Naive thymus-derived CD4-positive, alpha-beta T cell (primary cell): ENCODE measurements at regions of chr14 and their contacts with region 1.

Region 1: DNA sequence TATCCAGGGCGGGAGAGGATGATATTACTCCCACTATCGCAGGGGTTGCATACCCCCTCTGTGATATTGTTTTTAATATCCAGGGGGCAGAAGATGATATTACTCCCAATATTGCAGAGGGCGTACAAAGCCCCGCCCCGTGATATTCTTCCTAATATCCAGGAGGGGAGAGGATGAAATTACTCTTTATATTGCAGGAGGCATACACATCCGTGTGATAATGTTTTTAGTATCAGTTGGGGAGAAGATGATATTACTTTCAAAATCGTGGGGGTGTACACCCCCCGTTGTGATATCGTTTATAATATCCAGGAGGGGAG is 52.9 kb upstream of the OXA1L start:
- DNase-seq: no peak
- ATAC-seq: no peak
- H3K4me3 ChIP-seq: peak overlapping the region; percentile 34
- H3K4me3 Mint-ChIP-seq: peak overlapping the region; percentile 79 to 92 (median 88)
- H3K27ac ChIP-seq: no peak overlapping the region
- H3K27ac Mint-ChIP-seq: peak overlapping the region in 4 of 9 donors; percentile 32 to 76 (median 64)
- H3K4me1 ChIP-seq: peaks cover 4 to 6% of the 10 kb centered on the region in 2 donors
- H3K4me1 Mint-ChIP-seq: peaks cover 3 to 17% (median 11%) of the 10 kb centered on the region in 7 donors
- H3K27me3 ChIP-seq: no peaks in the 10 kb centered on the region
- H3K27me3 Mint-ChIP-seq: peaks cover 27 to 44% (median 34%) of the 10 kb centered on the region in 5 donors

Region 2: DNA sequence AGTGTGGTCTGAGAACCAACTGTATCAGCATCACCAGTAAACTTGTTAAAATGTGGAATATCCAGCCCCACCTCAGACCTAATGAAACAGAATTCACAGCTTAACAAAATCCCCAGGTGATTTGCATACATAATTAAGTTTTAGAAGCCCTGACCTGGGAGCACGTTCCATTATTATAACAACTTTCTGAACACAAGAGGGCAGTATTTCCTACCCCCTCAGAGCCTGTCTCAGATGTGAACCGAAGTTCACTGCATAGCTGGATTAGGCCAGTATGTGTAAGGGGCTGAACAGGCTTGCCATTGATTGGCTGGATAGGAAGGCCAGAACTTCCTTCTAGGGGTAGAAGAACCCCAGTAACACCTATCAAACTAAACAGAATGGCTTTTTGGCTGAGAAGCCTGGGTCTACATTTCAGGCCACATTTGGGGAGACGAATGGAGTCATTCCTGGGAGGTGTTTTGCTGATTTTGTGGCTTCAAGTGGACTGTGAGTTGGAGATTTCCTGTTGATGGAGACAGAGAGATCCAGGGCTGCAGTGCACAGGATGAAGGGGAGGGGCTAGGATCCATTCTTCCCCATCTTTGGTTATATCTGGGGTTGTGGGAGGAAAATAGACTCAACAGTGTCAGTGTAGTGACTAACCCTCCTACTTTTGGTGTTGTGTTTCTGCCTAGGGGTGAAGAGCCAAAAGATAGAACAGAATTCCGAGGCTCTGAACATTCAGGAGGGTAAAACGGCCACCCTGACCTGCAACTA is 945.3 kb before region 1 on chr14:
- CTCF ChIA-PET with region 1: no interaction called
- POLR2A ChIA-PET with region 1: no interaction called
- intact Hi-C with region 1: no loop called
- DNase-seq: peak in 7 of 9 donors; percentile 21 to 56 (median 41)
- ATAC-seq: peak; percentile 85
- H3K4me3 ChIP-seq: no peak overlapping the region
- H3K4me3 Mint-ChIP-seq: peak overlapping the region; percentile 42 to 81 (median 68)
- H3K27ac ChIP-seq: peak overlapping the region; percentile 6
- H3K27ac Mint-ChIP-seq: peak overlapping the region; percentile 4 to 87 (median 76)
- H3K4me1 ChIP-seq: no peaks in the 10 kb centered on the region
- H3K4me1 Mint-ChIP-seq: peaks cover 0 to 9% (median 0%) of the 10 kb centered on the region in 7 donors
- H3K27me3 ChIP-seq: no peaks in the 10 kb centered on the region
- H3K27me3 Mint-ChIP-seq: peaks cover 0 to 30% (median 5%) of the 10 kb centered on the region in 5 donors

Region 3: GRCh38 chr14:22822571-22823098 is 109.0 kb after region 1 on chr14:
- CTCF ChIA-PET with region 1: no interaction called
- POLR2A ChIA-PET with region 1: no interaction called
- intact Hi-C with region 1: loop called in 1 of 2 experiments (anchors 5 kb)
- DNase-seq: peak; percentile 50 to 71 (median 65)
- ATAC-seq: peak; percentile 83
- H3K4me3 ChIP-seq: peak overlapping the region; percentile 38
- H3K4me3 Mint-ChIP-seq: peak overlapping the region; percentile 47 to 78 (median 66)
- H3K27ac ChIP-seq: no peak overlapping the region
- H3K27ac Mint-ChIP-seq: peak overlapping the region in 3 of 9 donors; percentile 11 to 36 (median 22)
- H3K4me1 ChIP-seq: peaks cover 0 to 17% of the 10 kb centered on the region in 2 donors
- H3K4me1 Mint-ChIP-seq: peaks cover 6 to 37% (median 24%) of the 10 kb centered on the region in 7 donors
- H3K27me3 ChIP-seq: no peaks in the 10 kb centered on the region
- H3K27me3 Mint-ChIP-seq: peaks cover 0 to 16% (median 4%) of the 10 kb centered on the region in 5 donors

Region 4: DNA sequence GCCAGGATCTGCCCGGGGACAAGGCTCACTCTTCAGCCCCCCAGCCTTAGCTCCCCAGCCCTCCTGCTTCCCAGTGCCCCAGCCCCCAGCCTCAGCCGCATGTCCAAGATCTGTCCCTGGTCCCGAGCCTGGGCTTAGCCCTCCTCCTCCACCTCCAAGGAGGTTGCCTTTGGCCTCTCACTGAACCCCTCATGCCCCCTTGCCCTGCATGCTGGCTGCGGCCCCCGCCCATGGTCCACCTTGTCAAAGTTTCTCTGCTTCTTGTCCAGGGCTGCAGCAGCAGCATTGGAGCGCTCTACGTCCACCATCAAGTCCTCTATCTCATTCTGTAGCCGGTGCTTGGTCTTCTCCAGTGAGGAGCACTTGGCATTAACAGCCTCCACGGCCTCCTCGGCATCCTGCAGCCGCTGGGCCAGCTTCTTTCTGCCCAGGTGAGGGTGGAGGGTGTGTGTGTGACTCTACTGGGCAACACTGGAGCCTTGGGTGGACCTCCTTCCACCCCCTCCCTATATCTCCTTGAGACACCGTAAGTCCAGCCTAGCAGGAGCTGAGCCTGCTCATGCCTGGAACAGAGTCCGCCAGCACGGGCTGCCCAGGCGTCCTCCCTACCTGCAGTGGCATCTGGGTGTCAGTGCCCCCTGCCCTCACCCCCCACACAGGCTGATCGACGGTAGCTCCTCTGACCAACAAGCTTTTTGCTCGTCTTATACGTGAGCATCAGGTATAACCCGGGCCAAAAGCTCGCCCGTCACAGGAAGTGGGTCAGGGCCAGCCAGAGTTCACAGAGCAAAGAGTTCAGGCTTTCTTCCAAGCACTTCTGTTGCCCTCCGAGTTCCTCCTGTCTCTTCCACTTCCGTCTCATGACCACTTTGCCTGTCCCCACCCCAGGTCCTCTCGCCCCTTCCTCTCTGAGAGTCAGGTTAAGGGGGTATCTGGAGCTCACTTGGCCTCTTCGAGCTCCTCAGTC is 674.6 kb after region 1 on chr14:
- CTCF ChIA-PET with region 1: no interaction called
- POLR2A ChIA-PET with region 1: no interaction called
- intact Hi-C with region 1: no loop called
- DNase-seq: no peak
- ATAC-seq: no peak
- H3K4me3 ChIP-seq: no peak overlapping the region
- H3K4me3 Mint-ChIP-seq: no peak overlapping the region
- H3K27ac ChIP-seq: no peak overlapping the region
- H3K27ac Mint-ChIP-seq: no peak overlapping the region
- H3K4me1 ChIP-seq: no peaks in the 10 kb centered on the region
- H3K4me1 Mint-ChIP-seq: no peaks in the 10 kb centered on the region
- H3K27me3 ChIP-seq: no peaks in the 10 kb centered on the region
- H3K27me3 Mint-ChIP-seq: peaks cover 0 to 14% (median 0%) of the 10 kb centered on the region in 5 donors